ENCODE measurements at regions of chr19 and their contacts with region 1.

Region 1: GRCh38 chr19:33302175-33302973 is at the start of gene CEBPA:
- DNase-seq: peak; percentile 31
- H3K4me3 Mint-ChIP-seq: peak within 1 kb of the TSS; percentile 51
- H3K27ac Mint-ChIP-seq: no peak within 1 kb of the TSS
- H3K4me1 Mint-ChIP-seq: no peaks in the 10 kb centered on the region
- H3K27me3 Mint-ChIP-seq: peaks cover 44% of the 10 kb centered on the region
- total RNA-seq, gene CEBPA: 0.73 and 0.90 TPM in 2 replicates

Region 2: GRCh38 chr19:33235269-33235995 is 66.9 kb before region 1 on chr19:
- intact Hi-C with region 1: loop called (anchors 2 kb)
- DNase-seq: peak; percentile 59
- H3K4me3 Mint-ChIP-seq: no peak overlapping the region
- H3K27ac Mint-ChIP-seq: no peak overlapping the region
- H3K4me1 Mint-ChIP-seq: peaks cover 3% of the 10 kb centered on the region
- H3K27me3 Mint-ChIP-seq: peaks cover 3% of the 10 kb centered on the region

Region 3: GRCh38 chr19:33245948-33246708 is 56.2 kb before region 1 on chr19:
- intact Hi-C with region 1: no loop called
- DNase-seq: no peak
- H3K4me3 Mint-ChIP-seq: no peak overlapping the region
- H3K27ac Mint-ChIP-seq: no peak overlapping the region
- H3K4me1 Mint-ChIP-seq: no peaks in the 10 kb centered on the region
- H3K27me3 Mint-ChIP-seq: no peaks in the 10 kb centered on the region

Region 4: DNA sequence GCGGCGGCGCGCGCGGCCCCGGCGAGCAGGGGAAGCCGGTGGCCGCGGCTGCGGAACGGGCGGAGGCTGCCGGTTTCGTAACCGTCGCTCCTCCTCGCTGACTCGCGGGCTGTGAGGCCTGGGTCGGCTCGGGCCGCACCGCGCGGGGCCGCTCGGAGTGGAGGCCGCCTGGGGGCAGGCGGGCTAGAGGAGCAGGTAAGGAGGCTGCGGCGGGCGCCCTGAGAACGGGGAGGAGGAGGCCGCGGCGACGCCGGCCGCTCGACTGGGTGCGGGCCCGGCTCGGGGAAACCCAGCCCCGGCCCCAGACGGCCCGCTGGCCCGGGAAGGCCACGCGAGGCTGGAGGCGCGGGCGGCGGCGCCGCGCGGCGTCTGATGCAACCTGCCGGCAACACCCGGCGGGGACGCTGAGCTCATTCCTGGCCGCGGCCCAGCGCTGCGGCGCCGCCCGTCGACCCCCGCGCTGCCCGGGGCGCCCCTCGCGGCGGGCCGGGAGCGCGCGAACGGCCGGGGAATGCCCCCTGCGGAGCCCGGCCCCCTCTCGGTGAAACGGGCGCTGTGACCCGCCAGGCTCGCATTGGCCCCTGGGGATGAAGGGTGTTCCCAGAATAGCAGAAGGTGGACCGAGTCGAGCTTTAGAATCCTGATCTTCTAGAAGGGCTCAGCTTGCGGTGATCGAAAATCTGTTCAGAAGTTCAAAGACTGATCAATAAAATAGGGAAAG is 71.5 kb after region 1 on chr19 and contains the start of gene CEBPG:
- intact Hi-C with region 1: loop called (anchors 5 kb)
- DNase-seq: peak; percentile 51
- H3K4me3 Mint-ChIP-seq: peak within 1 kb of the TSS; percentile 97
- H3K27ac Mint-ChIP-seq: peak within 1 kb of the TSS; percentile 77
- H3K4me1 Mint-ChIP-seq: peaks cover 40% of the 10 kb centered on the region
- H3K27me3 Mint-ChIP-seq: peaks cover 1% of the 10 kb centered on the region
- total RNA-seq, gene CEBPG: 26.1 and 26.5 TPM in 2 replicates

Measured in activated T-helper 2 cell treated with anti-CD3 and anti-CD28 coated beads, Interferon-gamma antibody, Interleukin-2, Interleukin-4, amounts not matched to agents 10 μg/mL and 5 μg/mL and 100 μg/mL, durations not matched to agents 14 hours and 24 hours and 36 hours (primary cell).